ENCODE measurements at regions of chr10 and their contacts with region 1.

Region 1: DNA sequence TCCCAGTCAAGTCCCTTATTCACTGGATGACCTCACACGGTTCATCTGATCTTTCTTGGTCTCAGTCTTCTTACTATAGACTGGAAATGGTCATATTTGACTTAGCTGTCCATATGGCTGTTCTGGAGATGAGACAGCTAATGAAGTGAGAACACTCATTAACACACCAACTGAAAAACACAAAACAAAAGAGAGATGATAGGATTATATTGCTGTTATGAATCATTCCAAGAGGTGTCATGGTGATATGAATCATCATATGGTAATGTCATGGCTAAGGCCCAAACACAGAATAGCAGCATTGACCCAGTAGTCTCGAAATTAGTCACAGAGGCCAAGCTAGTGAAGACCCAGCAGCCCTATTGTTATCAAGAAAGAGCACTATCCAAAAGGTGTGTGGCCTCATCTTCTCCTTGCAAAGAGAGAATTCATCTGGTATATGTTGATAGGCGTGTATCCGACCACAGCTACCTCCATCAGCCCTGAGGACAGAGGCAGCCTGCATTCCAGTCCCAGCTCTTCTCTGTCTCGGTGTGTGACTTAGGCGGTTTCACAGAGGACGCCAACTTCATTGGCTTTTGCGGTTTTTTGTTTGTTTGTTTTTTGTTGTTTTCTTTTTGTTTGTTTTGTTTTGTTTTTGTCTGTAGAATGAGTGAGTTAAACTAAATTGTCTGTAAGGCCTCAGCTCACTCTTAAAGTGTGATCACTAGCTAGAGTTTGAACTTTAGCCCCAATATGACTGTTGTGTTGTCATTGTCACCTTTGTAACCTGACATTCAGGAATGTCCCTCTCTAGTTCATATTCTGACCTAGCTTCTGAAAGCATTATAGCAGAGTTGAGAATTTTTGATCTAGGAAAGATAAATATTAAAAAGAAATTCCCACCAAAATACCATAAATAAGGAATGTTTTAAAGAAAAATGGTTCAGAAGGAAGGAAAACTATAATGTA is 97.4 kb upstream of the PDCD4 start:
- DNase-seq: peak; percentile 69
- H3K4me3 Mint-ChIP-seq: peak overlapping the region; percentile 42
- H3K27ac Mint-ChIP-seq: peak overlapping the region; percentile 79
- H3K4me1 Mint-ChIP-seq: peaks cover 40% of the 10 kb centered on the region
- H3K27me3 Mint-ChIP-seq: no peaks in the 10 kb centered on the region

Region 2: GRCh38 chr10:110789604-110790433 is 15.5 kb after region 1 on chr10:
- CTCF ChIA-PET with region 1: no interaction called
- POLR2A ChIA-PET with region 1: no interaction called
- intact Hi-C with region 1: no loop called
- DNase-seq: no peak
- H3K4me3 Mint-ChIP-seq: no peak overlapping the region
- H3K27ac Mint-ChIP-seq: no peak overlapping the region
- H3K4me1 Mint-ChIP-seq: peaks cover 5% of the 10 kb centered on the region
- H3K27me3 Mint-ChIP-seq: no peaks in the 10 kb centered on the region

Region 3: GRCh38 chr10:110843031-110843430 is 68.7 kb after region 1 on chr10:
- CTCF ChIA-PET with region 1: no interaction called
- POLR2A ChIA-PET with region 1: no interaction called
- intact Hi-C with region 1: loop called (anchors 2 kb)
- DNase-seq: peak; percentile 70
- H3K4me3 Mint-ChIP-seq: no peak overlapping the region
- H3K27ac Mint-ChIP-seq: peak overlapping the region; percentile 24
- H3K4me1 Mint-ChIP-seq: peaks cover 25% of the 10 kb centered on the region
- H3K27me3 Mint-ChIP-seq: no peaks in the 10 kb centered on the region

Region 4: GRCh38 chr10:110857265-110858158 is 83.2 kb after region 1 on chr10:
- CTCF ChIA-PET with region 1: interaction called, 3 read pairs
- POLR2A ChIA-PET with region 1: interaction called, 6 read pairs
- intact Hi-C with region 1: loop called (anchors 1 kb)
- DNase-seq: peak; percentile 66
- H3K4me3 Mint-ChIP-seq: peak overlapping the region; percentile 25
- H3K27ac Mint-ChIP-seq: peak overlapping the region; percentile 72
- H3K4me1 Mint-ChIP-seq: peaks cover 82% of the 10 kb centered on the region
- H3K27me3 Mint-ChIP-seq: no peaks in the 10 kb centered on the region

Region 5: DNA sequence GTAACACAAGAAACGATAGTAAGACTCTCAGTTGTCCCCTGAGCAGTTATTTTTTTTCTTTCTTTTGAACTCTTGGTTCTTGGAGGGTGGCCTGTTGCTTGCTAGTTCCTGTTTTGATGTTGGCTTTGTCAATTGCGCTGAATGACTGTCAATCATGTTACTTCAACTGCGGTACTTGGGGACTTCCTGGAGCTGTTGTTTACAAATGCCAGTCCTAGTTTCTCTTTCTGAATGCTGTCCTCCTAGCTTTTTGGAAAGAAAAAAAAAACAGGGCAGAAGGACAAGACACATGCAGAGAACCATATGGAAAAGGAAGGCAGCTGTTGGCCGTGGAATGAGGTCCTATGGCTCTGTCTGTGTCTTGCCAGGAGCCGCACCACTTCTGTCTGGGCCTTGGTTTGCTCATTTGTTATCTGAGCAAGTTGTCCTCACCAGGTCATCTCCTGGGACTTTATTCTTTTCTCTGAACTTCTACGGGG is 90.4 kb after region 1 on chr10:
- CTCF ChIA-PET with region 1: no interaction called
- POLR2A ChIA-PET with region 1: interaction called, 5 read pairs
- intact Hi-C with region 1: loop called (anchors 1 kb)
- DNase-seq: peak; percentile 65
- H3K4me3 Mint-ChIP-seq: peak overlapping the region; percentile 72
- H3K27ac Mint-ChIP-seq: peak overlapping the region; percentile 95
- H3K4me1 Mint-ChIP-seq: peaks cover 93% of the 10 kb centered on the region
- H3K27me3 Mint-ChIP-seq: no peaks in the 10 kb centered on the region

Region 6: DNA sequence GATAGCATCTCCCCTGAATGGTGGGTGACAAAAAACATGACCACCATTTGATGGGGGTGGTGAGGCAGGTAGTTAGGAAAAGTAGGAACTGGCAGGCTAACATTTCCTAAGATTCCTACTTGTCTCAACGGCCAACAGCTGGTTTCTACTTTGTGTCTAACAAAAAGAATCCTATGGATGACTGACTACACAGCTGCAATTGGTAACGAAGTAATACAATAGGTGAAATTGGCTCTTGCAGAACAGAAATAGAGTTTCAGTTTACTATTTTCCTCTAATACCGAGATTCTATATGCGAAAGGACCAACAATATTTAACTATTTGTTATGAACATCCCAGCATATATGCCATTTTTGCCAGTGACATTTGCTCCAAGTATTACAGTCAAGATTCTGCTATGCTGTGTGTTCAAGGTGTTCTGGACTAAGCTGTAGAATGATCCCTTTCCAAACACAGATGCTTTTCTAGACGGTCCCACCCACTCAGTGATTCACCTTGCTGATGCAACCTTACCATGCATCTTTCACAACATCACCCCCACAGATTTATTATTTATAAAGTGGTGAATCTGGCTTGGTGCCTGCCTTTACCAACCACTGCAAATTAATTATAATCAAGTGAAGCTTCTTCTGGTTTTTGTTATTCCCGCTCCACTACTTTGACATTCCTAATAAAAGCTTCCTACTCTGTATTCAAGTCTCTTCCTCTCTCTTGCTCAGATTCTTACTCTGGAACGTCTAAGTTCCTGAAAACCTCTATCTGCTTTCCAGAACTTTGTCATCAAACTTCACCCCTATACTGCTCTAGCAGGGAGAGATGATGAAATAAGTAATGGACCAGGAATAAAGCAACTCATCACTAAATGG is 127.8 kb after region 1 on chr10:
- CTCF ChIA-PET with region 1: interaction called, 4 read pairs
- POLR2A ChIA-PET with region 1: interaction called, 5 read pairs
- intact Hi-C with region 1: loop called (anchors 1 kb)
- DNase-seq: peak; percentile 68
- H3K4me3 Mint-ChIP-seq: peak overlapping the region; percentile 6
- H3K27ac Mint-ChIP-seq: peak overlapping the region; percentile 79
- H3K4me1 Mint-ChIP-seq: peaks cover 40% of the 10 kb centered on the region
- H3K27me3 Mint-ChIP-seq: no peaks in the 10 kb centered on the region

Region 7: DNA sequence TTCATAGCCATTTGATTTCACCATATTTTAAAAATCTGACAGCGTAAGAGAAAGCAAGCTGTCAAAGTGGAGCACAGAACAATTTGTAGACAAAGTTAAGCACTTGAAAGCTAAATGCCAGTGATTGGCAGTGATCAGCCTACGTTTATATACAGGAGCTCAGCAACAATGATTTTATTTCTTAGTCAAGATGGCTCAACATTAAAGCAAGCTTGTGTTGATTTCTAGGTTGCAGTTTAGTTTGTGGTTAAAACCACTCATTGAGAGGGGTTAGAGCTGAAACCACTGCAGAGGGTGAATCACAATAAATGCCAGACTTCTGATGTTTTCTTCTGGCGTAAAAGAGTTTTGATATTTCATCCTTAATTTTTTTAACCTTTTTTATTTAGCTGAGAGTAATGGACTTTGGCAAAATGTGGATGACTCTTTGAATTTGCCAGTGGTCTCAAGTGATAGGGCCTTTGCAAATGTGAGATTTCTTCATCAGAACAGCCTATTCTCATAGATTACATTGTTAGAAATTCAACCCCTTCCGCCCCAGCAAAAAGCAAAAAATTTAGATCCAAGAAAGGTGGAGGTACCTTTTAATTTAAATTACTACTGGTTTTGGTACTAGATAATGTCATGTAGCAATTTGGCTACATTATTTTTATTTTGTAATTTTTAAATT is 218.8 kb after region 1 on chr10:
- CTCF ChIA-PET with region 1: no interaction called
- POLR2A ChIA-PET with region 1: interaction called, 4 read pairs
- intact Hi-C with region 1: loop called (anchors 1 kb)
- DNase-seq: no peak
- H3K4me3 Mint-ChIP-seq: no peak overlapping the region
- H3K27ac Mint-ChIP-seq: no peak overlapping the region
- H3K4me1 Mint-ChIP-seq: peaks cover 28% of the 10 kb centered on the region
- H3K27me3 Mint-ChIP-seq: no peaks in the 10 kb centered on the region